H1 (cell line): ENCODE measurements at regions of chr2 and their contacts with region 1.

Region 1: DNA sequence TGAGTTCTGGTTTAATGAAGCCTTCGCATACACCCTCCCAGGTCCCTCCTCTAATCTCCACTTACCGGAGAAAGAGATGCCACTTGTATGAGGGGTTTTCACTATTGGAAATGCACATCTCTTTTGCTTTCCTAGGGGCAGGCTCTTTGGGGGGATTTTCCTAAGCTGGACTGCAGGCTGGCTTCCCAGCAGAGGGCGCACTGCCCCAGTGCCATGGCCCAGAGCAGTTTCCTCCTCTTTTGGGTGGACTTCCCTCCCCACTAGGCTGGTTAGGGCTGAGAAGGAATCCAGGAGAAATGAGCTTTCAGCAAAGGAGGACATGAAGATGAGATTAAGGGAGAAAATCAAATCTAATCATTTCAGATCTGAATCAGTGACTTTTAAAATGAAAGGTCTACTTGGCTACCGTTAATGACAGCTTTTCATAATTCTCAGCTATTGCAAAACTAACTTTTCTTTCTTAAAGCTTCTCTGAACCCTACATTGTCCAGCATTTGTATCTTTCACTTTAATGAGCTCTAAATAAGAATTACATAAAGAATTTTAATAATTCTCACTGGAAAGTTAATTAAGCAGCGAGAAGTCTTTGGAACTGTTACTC is 784.1 kb upstream of the FANCL start:
- DNase-seq: peak; percentile 23 to 81
- H3K4me3 ChIP-seq: no peak overlapping the region
- H3K27ac ChIP-seq: no peak overlapping the region
- H3K4me1 ChIP-seq: no peaks in the 10 kb centered on the region
- H3K27me3 ChIP-seq: no peaks in the 10 kb centered on the region
- CTCF ChIP-seq: peak; percentile 91 to 96 (median 94)
- EP300 ChIP-seq: no peak
- POLR2A ChIP-seq: no peak
- RAD21 ChIP-seq: peak; percentile 91 to 92

Region 2: DNA sequence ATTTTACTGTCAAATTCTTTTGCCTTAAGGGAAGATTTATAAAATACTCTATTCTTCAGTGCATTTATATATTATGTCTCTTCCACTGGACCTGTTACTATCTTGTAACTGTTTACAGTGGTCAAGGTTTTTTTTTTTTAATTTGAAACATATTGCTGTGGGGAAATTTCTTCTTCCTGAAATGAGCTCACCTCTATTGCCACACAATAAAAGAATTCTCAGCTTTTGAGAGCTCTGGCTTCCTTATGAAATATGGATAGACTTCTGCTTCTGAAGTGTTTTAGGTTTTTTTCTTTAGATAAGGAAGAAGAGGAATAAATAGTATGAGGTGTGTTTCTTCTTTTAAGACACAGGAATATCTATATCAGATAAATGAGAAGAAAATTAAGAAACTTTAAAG is 971.0 kb before region 1 on chr2:
- CTCF ChIA-PET with region 1: no interaction called
- POLR2A ChIA-PET with region 1: no interaction called
- DNase-seq: no peak
- H3K4me3 ChIP-seq: no peak overlapping the region
- H3K27ac ChIP-seq: no peak overlapping the region
- H3K4me1 ChIP-seq: peaks cover 0 to 12% (median 8%) of the 10 kb centered on the region in 4 experiments; a peak in 3 of 7 replicates
- H3K27me3 ChIP-seq: no peaks in the 10 kb centered on the region
- CTCF ChIP-seq: no peak
- EP300 ChIP-seq: no peak
- POLR2A ChIP-seq: no peak
- RAD21 ChIP-seq: no peak

Region 3: DNA sequence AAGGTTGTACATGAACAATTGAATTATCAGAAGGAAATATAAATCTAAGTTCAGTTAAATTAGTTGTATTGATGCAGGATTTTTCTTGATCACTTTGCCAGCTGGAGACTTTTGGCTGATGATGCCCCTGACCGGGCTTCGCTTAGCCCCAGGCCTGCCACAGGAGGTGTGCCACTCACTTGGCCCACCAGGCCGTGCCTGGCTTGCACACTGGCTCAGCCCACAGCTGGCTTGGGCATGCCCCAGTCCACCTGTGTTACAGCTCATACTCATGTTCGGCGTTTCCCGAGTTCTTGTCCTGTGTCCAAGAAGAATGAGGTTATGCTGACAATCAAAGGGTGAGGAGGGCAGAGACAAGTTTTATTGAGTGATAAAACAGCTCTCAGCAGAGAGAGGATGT is 10.2 kb before region 1 on chr2:
- CTCF ChIA-PET with region 1: interaction called, 12 read pairs
- POLR2A ChIA-PET with region 1: interaction called, 4 read pairs
- DNase-seq: no peak
- H3K4me3 ChIP-seq: no peak overlapping the region
- H3K27ac ChIP-seq: no peak overlapping the region
- H3K4me1 ChIP-seq: no peaks in the 10 kb centered on the region
- H3K27me3 ChIP-seq: no peaks in the 10 kb centered on the region
- CTCF ChIP-seq: no peak
- EP300 ChIP-seq: no peak
- POLR2A ChIP-seq: no peak
- RAD21 ChIP-seq: no peak

Region 4: GRCh38 chr2:59047373-59047995 is 22.2 kb after region 1 on chr2:
- CTCF ChIA-PET with region 1: interaction called, 18 read pairs
- POLR2A ChIA-PET with region 1: no interaction called
- DNase-seq: no peak
- H3K4me3 ChIP-seq: no peak overlapping the region
- H3K27ac ChIP-seq: no peak overlapping the region
- H3K4me1 ChIP-seq: no peaks in the 10 kb centered on the region
- H3K27me3 ChIP-seq: no peaks in the 10 kb centered on the region
- CTCF ChIP-seq: no peak
- EP300 ChIP-seq: no peak
- POLR2A ChIP-seq: no peak
- RAD21 ChIP-seq: no peak

Region 5: GRCh38 chr2:59066787-59067405 is 41.6 kb after region 1 on chr2:
- CTCF ChIA-PET with region 1: interaction called, 19 read pairs
- POLR2A ChIA-PET with region 1: no interaction called
- DNase-seq: no peak
- H3K4me3 ChIP-seq: no peak overlapping the region
- H3K27ac ChIP-seq: no peak overlapping the region
- H3K4me1 ChIP-seq: no peaks in the 10 kb centered on the region
- H3K27me3 ChIP-seq: no peaks in the 10 kb centered on the region
- CTCF ChIP-seq: no peak
- EP300 ChIP-seq: no peak
- POLR2A ChIP-seq: no peak
- RAD21 ChIP-seq: no peak

Region 6: DNA sequence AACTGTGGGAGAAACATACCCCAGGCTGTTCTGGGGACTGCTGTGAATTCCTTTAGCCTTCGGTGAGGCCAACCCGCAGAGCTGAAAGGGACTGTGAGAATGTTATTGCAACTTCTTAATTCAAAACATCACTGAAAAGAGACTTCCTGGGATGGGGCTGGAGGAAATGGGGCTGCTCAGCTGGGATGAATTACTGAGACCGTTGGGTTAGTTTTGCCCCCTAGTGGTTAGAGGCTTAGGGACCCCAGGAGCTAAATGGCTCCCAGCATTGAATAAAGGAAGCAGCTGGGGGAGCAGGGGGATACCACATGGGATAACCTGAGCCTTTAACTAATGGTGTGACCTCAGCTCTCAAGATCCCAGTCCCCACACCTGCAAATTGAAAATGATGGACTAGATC is 157.0 kb after region 1 on chr2:
- CTCF ChIA-PET with region 1: interaction called, 19 read pairs
- POLR2A ChIA-PET with region 1: no interaction called
- DNase-seq: peak; percentile 43 to 57
- H3K4me3 ChIP-seq: no peak overlapping the region
- H3K27ac ChIP-seq: no peak overlapping the region
- H3K4me1 ChIP-seq: peaks cover 0 to 3% (median 2%) of the 10 kb centered on the region in 4 experiments; a peak in 4 of 7 replicates
- H3K27me3 ChIP-seq: peaks cover 0 to 9% (median 3%) of the 10 kb centered on the region in 4 experiments; a peak in 4 of 7 replicates
- CTCF ChIP-seq: peak; percentile 62 to 77 (median 72)
- EP300 ChIP-seq: no peak
- POLR2A ChIP-seq: no peak
- RAD21 ChIP-seq: peak; percentile 78 to 82